Endothelial cell of umbilical vein (primary cell): ENCODE measurements at regions of chr2 and their contacts with region 1.

Region 1: GRCh38 chr2:235779444-235779896 is 285.6 kb downstream of the AGAP1 start:
- DNase-seq: peak; percentile 74
- H3K4me3 ChIP-seq: no peak overlapping the region
- H3K27ac ChIP-seq: no peak overlapping the region
- H3K4me1 ChIP-seq: no peaks in the 10 kb centered on the region
- H3K27me3 ChIP-seq: no peaks in the 10 kb centered on the region
- CTCF ChIP-seq: peak; percentile 89 to 90
- POLR2A ChIP-seq: no peak

Region 2: GRCh38 chr2:235005603-235006259 is 773.7 kb before region 1 on chr2:
- CTCF ChIA-PET with region 1: no interaction called
- POLR2A ChIA-PET with region 1: no interaction called
- dilution Hi-C with region 1: no loop called
- intact Hi-C with region 1: no loop called
- DNase-seq: peak; percentile 75
- H3K4me3 ChIP-seq: no peak overlapping the region
- H3K27ac ChIP-seq: peak overlapping the region; percentile 43
- H3K4me1 ChIP-seq: peaks cover 17% of the 10 kb centered on the region
- H3K27me3 ChIP-seq: no peaks in the 10 kb centered on the region
- CTCF ChIP-seq: peak; percentile 25 to 26
- POLR2A ChIP-seq: no peak

Region 3: GRCh38 chr2:235766278-235766677 is 13.2 kb before region 1 on chr2:
- CTCF ChIA-PET with region 1: interaction called, 45 read pairs
- POLR2A ChIA-PET with region 1: no interaction called
- dilution Hi-C with region 1: no loop called
- intact Hi-C with region 1: loop called (anchors 1 kb)
- DNase-seq: peak; percentile 90
- H3K4me3 ChIP-seq: no peak overlapping the region
- H3K27ac ChIP-seq: no peak overlapping the region
- H3K4me1 ChIP-seq: no peaks in the 10 kb centered on the region
- H3K27me3 ChIP-seq: no peaks in the 10 kb centered on the region
- CTCF ChIP-seq: peak; percentile 67 to 73
- POLR2A ChIP-seq: no peak

Region 4: GRCh38 chr2:235859651-235860050 is 80.2 kb after region 1 on chr2:
- CTCF ChIA-PET with region 1: interaction called, 12 read pairs
- POLR2A ChIA-PET with region 1: no interaction called
- dilution Hi-C with region 1: no loop called
- intact Hi-C with region 1: no loop called
- DNase-seq: peak; percentile 82
- H3K4me3 ChIP-seq: peak overlapping the region in 1 of 3 experiments; percentile 29
- H3K27ac ChIP-seq: peak overlapping the region; percentile 98
- H3K4me1 ChIP-seq: peaks cover 42% of the 10 kb centered on the region
- H3K27me3 ChIP-seq: no peaks in the 10 kb centered on the region
- CTCF ChIP-seq: no peak
- POLR2A ChIP-seq: no peak

Region 5: GRCh38 chr2:236107942-236108625 is 328.6 kb after region 1 on chr2:
- CTCF ChIA-PET with region 1: interaction called, 3 read pairs
- POLR2A ChIA-PET with region 1: no interaction called
- dilution Hi-C with region 1: no loop called
- intact Hi-C with region 1: loop called (anchors 5 kb)
- DNase-seq: peak; percentile 58
- H3K4me3 ChIP-seq: no peak overlapping the region
- H3K27ac ChIP-seq: peak overlapping the region; percentile 28
- H3K4me1 ChIP-seq: peaks cover 28% of the 10 kb centered on the region
- H3K27me3 ChIP-seq: no peaks in the 10 kb centered on the region
- CTCF ChIP-seq: no peak
- POLR2A ChIP-seq: no peak

Region 6: DNA sequence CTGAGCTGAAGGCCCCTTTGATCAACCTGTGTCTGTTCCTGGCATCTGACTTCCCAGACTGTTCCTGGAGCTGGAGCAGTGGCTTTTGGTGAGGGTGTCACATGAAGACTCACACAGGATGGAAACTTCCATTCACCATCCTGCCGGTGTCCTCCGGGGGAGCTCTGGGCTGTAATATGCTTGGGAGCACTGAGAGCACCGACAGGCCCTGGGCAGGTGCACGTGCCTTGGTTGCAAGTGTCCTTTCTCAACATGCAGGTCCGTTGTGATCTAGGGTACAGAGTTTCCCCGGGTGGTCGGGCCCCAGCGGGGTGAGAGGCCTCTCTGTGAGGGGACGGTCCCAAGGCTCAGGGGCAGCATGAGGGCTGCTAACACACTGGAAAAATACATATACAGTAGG is 413.6 kb after region 1 on chr2:
- CTCF ChIA-PET with region 1: interaction called, 10 read pairs
- POLR2A ChIA-PET with region 1: no interaction called
- dilution Hi-C with region 1: no loop called
- intact Hi-C with region 1: no loop called
- DNase-seq: no peak
- H3K4me3 ChIP-seq: no peak overlapping the region
- H3K27ac ChIP-seq: no peak overlapping the region
- H3K4me1 ChIP-seq: no peaks in the 10 kb centered on the region
- H3K27me3 ChIP-seq: no peaks in the 10 kb centered on the region
- CTCF ChIP-seq: no peak
- POLR2A ChIP-seq: no peak

Region 7: DNA sequence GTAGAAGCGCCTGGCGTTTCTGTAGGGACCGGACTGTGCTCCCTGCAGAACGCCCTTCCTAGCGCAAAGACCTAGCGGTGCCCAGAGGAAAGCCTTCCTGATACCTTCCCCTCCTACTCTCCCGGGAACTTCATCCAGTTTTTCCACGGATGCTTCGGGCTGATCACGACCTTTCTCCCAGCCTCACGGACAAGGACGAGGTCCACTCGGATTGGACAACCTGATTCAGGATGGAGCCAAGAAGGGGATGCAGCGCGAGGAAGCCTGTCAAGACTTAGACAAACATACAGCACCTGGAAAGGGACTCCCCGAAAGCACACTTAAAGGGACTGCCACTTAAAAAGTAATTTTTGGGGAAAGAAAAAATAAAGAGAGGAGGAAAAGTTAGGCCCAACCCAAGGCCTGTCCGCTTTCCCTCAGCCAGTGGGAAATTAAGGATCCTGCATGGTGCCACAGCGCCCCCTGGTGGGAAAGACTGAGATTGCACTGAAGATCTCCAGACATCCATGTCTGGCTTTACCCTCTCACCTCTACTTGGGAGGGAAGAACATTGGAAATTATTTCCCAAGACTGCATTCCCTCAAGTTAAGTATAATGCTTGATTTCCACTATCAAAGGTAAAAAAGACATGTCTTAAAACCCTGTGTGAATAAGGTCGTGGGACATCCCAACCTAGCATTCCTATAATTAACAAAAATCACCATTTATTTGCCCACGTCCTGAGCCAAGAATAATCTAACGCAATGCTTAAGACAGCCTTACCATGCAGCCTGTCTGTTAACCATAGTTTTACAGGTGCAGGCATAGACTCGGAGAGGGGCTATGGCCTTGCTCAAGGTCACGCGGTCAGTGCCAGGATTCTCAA is 1292.8 kb after region 1 on chr2:
- CTCF ChIA-PET with region 1: interaction called, 12 read pairs
- POLR2A ChIA-PET with region 1: no interaction called
- dilution Hi-C with region 1: no loop called
- intact Hi-C with region 1: loop called (anchors 1 kb)
- DNase-seq: peak; percentile 72
- H3K4me3 ChIP-seq: no peak overlapping the region
- H3K27ac ChIP-seq: no peak overlapping the region
- H3K4me1 ChIP-seq: peaks cover 38% of the 10 kb centered on the region
- H3K27me3 ChIP-seq: no peaks in the 10 kb centered on the region
- CTCF ChIP-seq: peak; percentile 88
- POLR2A ChIP-seq: no peak